ENCODE measurements at regions of chr22 and their contacts with region 1.

Region 1: GRCh38 chr22:22770280-22770871 is 117.2 kb upstream of the IGLL5 start:
- DNase-seq: peak; percentile 72

Region 2: GRCh38 chr22:22687638-22688500 is 82.5 kb before region 1 on chr22:
- CTCF ChIA-PET with region 1: no interaction called
- POLR2A ChIA-PET with region 1: no interaction called
- DNase-seq: peak; percentile 57

Region 3: DNA sequence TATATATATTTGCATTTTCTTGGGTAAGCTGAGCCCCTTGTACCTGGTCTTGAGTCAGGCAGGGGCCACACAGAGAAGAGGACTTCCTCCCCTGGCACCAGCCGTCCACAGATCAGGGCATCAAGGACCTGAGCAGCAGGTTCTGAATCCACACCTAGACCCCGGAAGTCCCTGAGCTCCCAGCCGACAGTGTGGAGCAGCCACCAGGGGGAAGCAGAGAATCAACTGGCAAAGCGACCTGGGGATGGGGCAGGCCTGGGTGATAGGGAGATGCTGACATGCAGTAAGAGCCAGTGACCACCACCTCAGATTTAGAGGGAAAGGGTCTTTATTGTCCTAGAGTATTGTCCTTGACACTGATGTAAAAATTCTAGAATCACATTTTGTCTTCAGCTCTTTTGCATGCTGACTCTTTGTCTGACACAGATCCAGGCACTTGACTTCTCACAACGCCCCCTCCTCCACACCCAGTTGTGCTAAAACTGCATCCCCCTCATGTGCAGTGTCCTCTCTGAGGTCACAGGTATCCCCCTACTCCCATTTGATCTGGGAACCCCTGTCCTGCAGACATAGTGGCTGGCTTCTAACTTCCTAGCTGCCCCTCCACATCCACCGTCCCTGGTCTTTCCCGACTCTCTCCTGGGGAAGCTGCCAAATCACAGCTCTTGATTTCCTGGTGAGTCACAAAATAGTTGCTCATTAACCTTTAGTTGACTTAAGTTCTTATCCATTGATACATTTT is 16.7 kb before region 1 on chr22:
- CTCF ChIA-PET with region 1: interaction called, 17 read pairs
- POLR2A ChIA-PET with region 1: no interaction called
- DNase-seq: peak; percentile 88

Region 4: GRCh38 chr22:22787786-22788459 is 17.5 kb after region 1 on chr22:
- CTCF ChIA-PET with region 1: interaction called, 13 read pairs
- POLR2A ChIA-PET with region 1: no interaction called
- DNase-seq: peak; percentile 85